Right ventricle myocardium superior (tissue), 1 donor: ENCODE measurements at regions of chr14 and their contacts with region 1.

Region 1: DNA sequence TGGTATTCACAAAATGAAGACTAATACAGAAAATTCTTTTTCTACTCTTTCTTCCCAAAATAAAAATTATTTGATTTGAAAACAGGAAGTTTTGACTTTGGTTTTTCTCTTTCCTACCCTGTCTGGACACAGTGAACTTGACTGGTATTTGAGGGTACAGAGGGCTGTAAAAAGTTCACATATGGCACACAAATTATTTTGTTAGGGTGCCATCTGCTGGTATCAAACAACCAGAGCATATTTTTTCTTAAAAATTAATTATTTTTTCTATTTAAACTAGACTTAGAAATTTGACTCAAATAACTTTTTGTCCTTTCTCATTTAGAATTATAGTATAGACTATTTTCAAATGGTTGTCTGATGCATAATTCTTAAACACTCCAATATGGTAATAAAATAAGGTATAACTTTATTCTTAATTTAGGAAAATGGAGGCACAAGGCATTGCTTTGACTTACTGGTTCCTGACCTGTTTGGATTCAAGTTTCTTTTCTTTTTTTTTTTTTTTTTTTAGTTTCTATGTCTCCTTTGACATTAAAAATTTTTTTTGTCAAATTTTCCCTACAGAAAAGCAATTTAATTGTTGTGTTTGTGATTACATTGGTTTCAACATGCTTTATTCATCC is 390.6 kb downstream of the PRKD1 start:
- DNase-seq: no peak
- ATAC-seq: no peak

Region 2: GRCh38 chr14:28756884-28757570 is 780.0 kb before region 1 on chr14:
- intact Hi-C with region 1: loop called (anchors 5 kb)
- DNase-seq: no peak
- ATAC-seq: no peak

Region 3: GRCh38 chr14:29618323-29619067 is 81.5 kb after region 1 on chr14:
- intact Hi-C with region 1: no loop called
- DNase-seq: no peak
- ATAC-seq: no peak

Region 4: DNA sequence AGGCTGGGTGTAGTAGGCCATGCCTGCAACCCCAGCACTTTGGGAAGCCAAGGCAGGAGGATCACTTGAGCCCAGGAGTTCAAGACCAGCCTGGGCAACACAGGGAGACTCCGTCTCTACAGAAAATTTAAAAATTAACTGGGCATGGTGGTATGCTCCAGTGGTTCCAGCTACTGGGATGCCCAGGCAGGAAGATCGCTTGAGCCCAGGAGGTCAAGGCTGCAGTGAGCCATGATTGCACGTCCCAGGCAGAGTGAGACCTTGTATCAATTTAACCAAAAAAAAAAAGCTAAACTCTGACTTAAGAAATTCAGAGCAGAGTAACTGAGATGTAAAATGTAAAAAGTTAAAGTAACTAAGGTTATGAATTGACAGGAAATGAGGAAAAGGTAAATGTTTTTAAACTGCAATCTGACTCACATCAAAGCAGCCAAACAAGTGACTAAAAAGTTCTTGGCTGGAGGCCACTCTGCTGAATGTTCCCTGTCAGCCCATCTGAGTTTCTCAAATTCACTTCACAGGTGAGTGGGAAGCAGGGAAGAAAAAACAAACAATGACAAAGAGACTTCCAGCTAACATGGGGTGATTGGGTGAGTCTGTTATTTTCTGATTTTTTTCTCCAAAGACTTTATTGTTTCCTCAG is 369.4 kb after region 1 on chr14:
- intact Hi-C with region 1: no loop called
- DNase-seq: no peak
- ATAC-seq: no peak